ENCODE measurements at regions of chrX and their contacts with region 1.

Region 1: GRCh38 chrX:123450221-123450620 is 266.1 kb downstream of the GRIA3 start:
- DNase-seq: no peak
- H3K4me3 Mint-ChIP-seq: no peak overlapping the region
- H3K27ac Mint-ChIP-seq: no peak overlapping the region
- H3K4me1 Mint-ChIP-seq: no peaks in the 10 kb centered on the region
- H3K27me3 Mint-ChIP-seq: no peaks in the 10 kb centered on the region

Region 2: DNA sequence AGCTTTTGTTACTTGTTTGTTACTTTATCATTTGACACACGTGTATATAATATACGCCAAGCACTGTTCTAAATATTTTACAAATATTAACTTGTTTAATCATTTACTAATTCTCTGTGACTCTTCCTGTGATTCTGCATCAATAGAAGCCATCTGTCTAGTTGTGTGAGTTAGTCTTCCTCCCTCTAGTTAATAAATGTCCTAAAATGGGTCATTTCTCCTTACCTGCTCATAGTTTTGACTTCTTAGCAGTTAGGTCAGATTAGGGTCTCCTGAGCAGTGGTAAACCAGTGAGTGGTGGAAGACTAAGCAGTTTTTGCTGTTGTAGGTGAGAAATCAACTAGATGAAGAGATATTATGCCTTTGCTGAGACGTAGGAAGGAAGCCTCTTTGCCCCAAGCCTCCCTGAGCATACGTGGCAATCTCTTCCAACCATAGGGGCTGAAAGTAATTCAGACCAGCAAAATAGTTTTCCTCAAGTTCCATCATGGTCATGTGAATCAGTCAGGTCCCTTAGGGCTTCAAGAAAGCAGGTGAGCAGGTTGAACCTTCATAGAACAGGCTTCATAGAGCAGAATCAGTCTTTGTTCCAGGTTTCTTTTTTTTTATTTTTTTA is 321.3 kb after region 1 on chrX:
- CTCF ChIA-PET with region 1: no interaction called
- intact Hi-C with region 1: loop called (anchors 10 kb)
- DNase-seq: no peak
- H3K4me3 Mint-ChIP-seq: no peak overlapping the region
- H3K27ac Mint-ChIP-seq: no peak overlapping the region
- H3K4me1 Mint-ChIP-seq: no peaks in the 10 kb centered on the region
- H3K27me3 Mint-ChIP-seq: no peaks in the 10 kb centered on the region

Measured in activated naive CD4-positive, alpha-beta T cell treated with anti-CD3 and anti-CD28 coated beads for 36 hours (primary cell).